Posterior cingulate gyrus (tissue), 11 donors: ENCODE measurements at regions of chr6 and their contacts with region 1.

Region 1: DNA sequence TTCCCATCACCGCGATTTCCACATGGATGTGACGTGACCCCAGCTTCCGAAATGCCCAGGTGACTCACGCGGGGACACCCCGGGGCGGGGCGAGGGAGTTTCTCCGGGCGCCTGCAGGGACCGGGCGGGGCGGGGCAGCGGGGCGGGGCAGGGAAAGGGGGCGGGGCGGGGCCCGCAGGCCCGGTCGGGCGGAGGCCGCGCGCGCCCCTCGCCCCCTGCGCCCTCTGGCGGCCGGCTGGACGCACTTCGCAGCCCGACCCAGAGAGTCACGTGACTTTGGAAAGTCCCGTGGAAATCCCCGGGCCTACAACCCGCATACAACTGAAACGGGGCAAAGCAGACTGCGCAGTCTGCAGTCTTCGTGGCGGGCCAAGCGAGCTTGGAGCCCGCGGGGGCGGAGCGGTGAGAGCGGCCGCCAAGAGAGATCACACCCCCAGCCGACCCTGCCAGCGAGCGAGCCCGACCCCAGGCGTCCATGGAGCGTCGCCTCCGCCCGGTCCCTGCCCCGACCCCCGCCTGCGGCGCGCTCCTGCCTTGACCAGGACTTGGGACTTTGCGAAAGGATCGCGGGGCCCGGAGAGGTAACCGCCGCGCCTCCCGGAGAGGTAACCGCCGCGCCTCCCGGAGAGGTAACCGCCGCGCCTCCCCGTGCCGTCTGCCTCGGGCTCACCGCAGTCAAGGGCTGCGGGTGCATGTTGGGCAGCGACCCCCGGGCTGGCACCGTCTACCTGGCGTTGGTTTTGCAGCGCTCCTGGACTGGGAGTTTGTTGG is at the start of gene TNFAIP3:
- DNase-seq: peak; percentile 61 to 96 (median 76)

Region 2: GRCh38 chr6:137423444-137424168 is 443.5 kb before region 1 on chr6:
- intact Hi-C with region 1: no loop called
- DNase-seq: no peak

Region 3: DNA sequence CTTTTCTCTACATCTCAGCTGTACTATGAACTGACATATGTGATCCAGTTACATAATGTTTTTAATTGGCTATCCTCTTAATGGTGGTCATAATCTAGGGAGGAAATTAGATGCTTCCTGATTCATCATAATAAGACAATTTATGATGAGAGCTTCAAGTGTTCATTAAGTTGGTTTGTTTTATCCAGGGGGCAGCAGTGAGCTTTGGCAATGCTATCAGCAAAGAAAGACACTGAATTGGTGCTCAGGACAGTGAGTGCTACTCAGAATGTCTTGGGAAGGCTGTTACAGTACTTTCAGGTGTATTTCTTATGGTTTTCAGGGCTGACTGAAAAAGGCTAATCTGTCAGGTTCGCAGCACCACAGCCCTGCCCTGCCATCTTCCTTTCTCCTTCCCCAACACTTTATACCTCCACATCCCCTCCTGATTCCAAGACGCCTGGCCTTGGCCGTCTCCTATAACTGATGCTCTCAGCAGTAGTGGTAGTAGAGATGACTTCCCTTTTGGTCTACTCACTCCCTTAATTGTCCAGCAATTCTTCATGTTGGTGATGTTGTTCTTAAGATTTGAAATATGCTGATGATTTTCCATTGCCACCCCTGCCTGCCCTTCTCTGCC is 67.0 kb before region 1 on chr6:
- intact Hi-C with region 1: loop called (anchors 5 kb)
- DNase-seq: peak in 1 of 10 donors; percentile 40

Region 4: GRCh38 chr6:137933696-137934095 is 66.6 kb after region 1 on chr6:
- intact Hi-C with region 1: no loop called
- DNase-seq: no peak